ENCODE measurements at regions of chr3 and their contacts with region 1.

Region 1: DNA sequence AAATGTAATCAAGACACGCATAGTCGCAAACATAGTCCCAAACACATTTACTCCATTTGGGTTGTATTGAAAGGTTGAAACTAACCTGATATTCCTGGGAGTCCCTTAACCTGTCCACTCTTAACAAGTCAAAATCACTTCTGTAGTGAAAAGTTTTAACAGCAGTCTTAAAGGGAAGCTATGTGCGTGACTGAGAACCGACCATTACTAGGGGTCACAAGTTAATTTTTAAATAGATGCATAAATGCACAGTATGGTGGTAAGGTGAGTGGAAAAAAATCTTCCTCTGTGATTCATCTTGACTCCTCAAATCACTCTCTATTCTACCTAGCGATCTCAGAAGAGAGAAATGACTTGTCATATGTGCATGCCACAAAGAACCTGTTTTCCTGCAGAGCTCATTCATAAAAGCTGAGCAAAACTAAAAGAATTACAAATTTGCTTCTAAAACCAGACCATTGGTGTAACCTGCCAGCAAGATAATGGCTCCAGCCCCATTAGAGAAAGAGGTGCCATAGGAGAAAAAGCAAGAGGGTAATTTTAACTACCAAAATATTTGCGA is 4.8 kb downstream of the GPR15 start:
- DNase-seq: no peak
- H3K4me3 Mint-ChIP-seq: peak overlapping the region; percentile 43
- H3K27ac Mint-ChIP-seq: peak overlapping the region; percentile 88
- H3K4me1 Mint-ChIP-seq: peaks cover 68% of the 10 kb centered on the region
- H3K27me3 Mint-ChIP-seq: no peaks in the 10 kb centered on the region

Region 2: DNA sequence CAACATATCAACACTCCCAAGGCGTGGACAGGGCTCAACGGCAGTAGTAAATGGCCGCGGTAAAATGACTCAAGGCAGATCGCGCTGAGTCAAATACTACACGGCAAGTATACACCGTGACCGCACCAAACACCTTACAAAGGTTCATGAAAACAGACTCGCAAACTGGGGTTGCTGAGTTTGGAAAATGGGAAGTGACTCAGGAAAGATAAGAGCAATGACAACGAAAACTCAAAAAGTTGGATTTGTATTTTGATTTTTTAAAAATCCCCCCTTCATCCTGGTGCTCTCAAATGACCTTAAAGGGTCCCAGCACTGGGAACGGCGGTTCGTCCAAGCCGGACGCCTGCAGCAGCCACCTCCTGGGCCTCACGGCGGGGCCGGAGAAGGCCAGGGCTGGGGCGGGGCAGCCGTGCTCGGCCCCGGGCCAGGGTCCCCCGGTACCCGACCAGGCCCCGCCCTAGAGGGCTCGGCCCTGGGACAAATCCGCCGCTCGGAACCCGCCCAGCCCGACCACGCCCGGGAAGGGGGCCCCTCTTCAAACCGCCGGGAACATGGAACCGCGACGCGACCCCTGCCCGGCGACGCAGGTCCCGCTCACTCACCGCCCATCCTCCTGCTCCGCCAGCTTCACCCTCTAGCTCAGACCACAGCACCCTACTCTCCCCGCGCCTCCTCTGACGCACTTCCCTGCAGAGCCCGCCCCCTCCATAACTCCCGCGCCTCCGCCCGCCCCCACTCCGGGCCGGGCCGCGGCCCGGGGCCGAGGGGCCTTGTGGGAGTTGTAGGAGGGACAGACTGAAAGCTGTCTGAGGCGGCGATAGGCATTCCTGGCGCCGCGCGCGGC is 14.1 kb before region 1 on chr3 and contains the start of gene CLDND1:
- CTCF ChIA-PET with region 1: no interaction called
- DNase-seq: peak; percentile 97
- H3K4me3 Mint-ChIP-seq: peak within 1 kb of the TSS; percentile 92
- H3K27ac Mint-ChIP-seq: peak within 1 kb of the TSS; percentile 99
- H3K4me1 Mint-ChIP-seq: peaks cover 74% of the 10 kb centered on the region
- H3K27me3 Mint-ChIP-seq: peaks cover 5% of the 10 kb centered on the region

Region 3: GRCh38 chr3:98563661-98564281 is 27.2 kb after region 1 on chr3:
- CTCF ChIA-PET with region 1: interaction called, 14 read pairs
- DNase-seq: peak; percentile 35
- H3K4me3 Mint-ChIP-seq: peak overlapping the region; percentile 24
- H3K27ac Mint-ChIP-seq: peak overlapping the region; percentile 99
- H3K4me1 Mint-ChIP-seq: peaks cover 93% of the 10 kb centered on the region
- H3K27me3 Mint-ChIP-seq: no peaks in the 10 kb centered on the region

Region 4: DNA sequence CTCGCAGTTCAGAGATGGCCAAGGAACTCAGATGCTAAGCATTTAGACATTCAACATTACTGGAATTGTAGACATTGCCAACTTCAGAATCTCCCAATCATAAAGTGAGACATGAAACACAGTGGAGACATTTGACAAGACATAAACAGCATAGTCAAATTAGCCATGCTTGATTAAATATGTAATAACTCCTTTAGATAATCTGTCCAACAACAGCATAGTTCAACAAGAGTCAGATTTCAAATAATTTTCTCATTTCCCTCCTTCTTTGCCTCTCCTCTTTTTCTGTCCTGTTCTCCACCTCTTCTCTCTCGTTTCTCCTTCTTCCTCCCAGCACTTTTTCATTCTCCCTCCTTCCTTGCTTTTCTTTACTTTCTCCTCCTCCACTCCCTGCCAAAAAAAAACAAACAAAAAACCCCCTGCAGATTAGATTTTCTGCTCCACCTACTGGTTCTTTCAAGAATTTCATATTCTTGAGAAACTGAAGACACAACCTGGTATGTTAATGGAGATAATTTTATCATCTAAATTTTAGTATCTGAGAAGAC is 36.7 kb after region 1 on chr3:
- CTCF ChIA-PET with region 1: interaction called, 10 read pairs
- DNase-seq: no peak
- H3K4me3 Mint-ChIP-seq: peak overlapping the region; percentile 14
- H3K27ac Mint-ChIP-seq: peak overlapping the region; percentile 82
- H3K4me1 Mint-ChIP-seq: peaks cover 66% of the 10 kb centered on the region
- H3K27me3 Mint-ChIP-seq: no peaks in the 10 kb centered on the region